ENCODE measurements at regions of chr2 and their contacts with region 1.

Region 1: DNA sequence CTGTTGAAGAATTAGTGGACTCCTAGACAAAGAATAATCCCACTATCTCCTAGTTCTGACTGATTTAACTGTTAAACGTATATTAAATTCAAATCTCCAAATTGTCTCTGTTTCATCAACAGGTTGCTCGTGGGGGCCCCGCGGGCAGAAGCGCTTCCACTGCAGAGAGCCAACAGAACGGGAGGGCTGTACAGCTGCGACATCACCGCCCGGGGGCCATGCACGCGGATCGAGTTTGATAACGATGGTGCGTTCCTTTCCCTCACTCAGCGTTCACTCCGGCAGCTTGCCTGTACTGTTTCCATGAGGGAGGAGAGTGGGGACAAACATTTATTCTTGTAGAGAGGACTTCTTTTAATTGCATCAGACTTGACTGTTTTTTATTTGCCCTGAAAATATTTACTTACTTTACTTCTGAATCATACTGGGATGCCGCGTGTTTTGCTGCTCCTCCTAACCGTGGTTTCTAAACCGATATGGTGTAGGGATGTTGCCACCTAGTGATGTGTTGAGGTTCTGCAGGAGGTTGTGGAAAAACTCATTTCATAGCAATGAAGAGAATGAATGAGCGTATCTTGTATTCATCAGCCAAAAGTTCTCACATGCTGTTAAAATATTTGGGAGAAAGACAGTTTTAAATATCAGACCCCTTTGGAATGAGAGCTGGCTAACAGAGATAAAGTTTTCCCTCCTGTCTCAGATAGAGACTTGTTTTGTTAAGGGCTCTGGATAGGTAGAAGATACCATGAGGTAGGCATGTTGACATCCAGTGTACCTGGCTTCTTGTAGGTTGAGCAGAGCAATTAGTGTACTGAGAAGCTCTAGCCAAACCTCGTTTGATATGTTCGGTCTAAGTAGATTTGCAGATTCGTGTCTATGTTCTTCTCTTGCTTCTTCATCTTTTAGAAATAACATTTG is 38.3 kb downstream of the ITGA6 start:
- DNase-seq: peak; percentile 51 to 87 (median 69)
- ATAC-seq: peak; percentile 40
- H3K4me3 ChIP-seq: no peak overlapping the region
- H3K4me3 Mint-ChIP-seq: peak overlapping the region; percentile 73
- H3K27ac ChIP-seq: peak overlapping the region; percentile 49 to 79
- H3K27ac Mint-ChIP-seq: peak overlapping the region; percentile 93
- H3K4me1 ChIP-seq: peaks cover 54% of the 10 kb centered on the region
- H3K4me1 Mint-ChIP-seq: peaks cover 79% of the 10 kb centered on the region
- H3K27me3 ChIP-seq: no peaks in the 10 kb centered on the region
- H3K27me3 Mint-ChIP-seq: no peaks in the 10 kb centered on the region
- CTCF ChIP-seq: peak; percentile 90

Region 2: DNA sequence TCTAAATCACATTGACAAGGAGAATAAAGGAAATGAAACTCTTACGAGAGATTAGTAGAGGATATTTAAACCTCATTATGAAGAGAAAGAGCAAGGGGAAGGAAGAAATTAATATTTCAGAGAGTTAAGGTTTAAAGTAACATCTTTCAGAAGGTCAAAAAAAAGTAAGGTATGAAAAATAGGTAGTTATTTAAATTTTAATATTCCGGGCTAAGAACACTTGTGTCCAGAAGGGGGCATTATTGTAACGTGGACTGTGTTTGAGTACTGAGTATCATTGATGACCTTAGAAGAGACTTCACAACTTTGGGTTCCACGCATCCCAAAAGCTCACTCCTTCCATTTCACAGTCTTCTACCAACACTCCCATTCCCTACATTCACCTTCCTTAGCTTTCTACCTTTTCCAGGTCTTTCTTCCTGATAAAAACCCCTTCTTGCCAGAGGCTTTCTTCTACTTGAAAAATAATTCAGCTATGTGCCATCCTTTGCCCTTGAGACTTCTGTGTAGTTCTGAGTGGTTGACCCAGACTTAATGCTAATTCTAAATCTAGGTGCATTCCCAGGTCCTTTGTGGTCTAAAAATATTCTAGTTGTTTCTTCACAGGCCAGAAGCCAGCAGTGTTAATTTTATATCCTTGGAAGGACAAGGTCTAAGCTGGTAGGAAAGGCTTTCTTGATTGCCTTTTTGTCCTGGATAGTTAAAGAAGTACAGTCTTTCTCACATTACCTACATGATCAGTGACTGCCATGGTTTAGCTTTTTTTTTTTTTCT is 761.9 kb before region 1 on chr2:
- CTCF ChIA-PET with region 1: interaction called, 3 read pairs
- POLR2A ChIA-PET with region 1: no interaction called
- intact Hi-C with region 1: loop called (anchors 1 to 2 kb)
- DNase-seq: peak in 4 of 14 experiments; percentile 5 to 59 (median 50)
- ATAC-seq: peak; percentile 52
- H3K4me3 ChIP-seq: no peak overlapping the region
- H3K4me3 Mint-ChIP-seq: no peak overlapping the region
- H3K27ac ChIP-seq: no peak overlapping the region
- H3K27ac Mint-ChIP-seq: peak overlapping the region; percentile 11
- H3K4me1 ChIP-seq: no peaks in the 10 kb centered on the region
- H3K4me1 Mint-ChIP-seq: peaks cover 17% of the 10 kb centered on the region
- H3K27me3 ChIP-seq: no peaks in the 10 kb centered on the region
- H3K27me3 Mint-ChIP-seq: no peaks in the 10 kb centered on the region
- CTCF ChIP-seq: peak; percentile 50

Region 3: GRCh38 chr2:171999604-172000469 is 465.8 kb before region 1 on chr2 and contains the start of gene METAP1D:
- CTCF ChIA-PET with region 1: no interaction called
- POLR2A ChIA-PET with region 1: no interaction called
- intact Hi-C with region 1: loop called (anchors 10 kb)
- DNase-seq: peak; percentile 61 to 93 (median 82)
- ATAC-seq: peak; percentile 90
- H3K4me3 ChIP-seq: peak within 1 kb of the TSS; percentile 75
- H3K4me3 Mint-ChIP-seq: peak within 1 kb of the TSS; percentile 88
- H3K27ac ChIP-seq: peak within 1 kb of the TSS; percentile 23 to 38
- H3K27ac Mint-ChIP-seq: peak within 1 kb of the TSS; percentile 74
- H3K4me1 ChIP-seq: peaks cover 12% of the 10 kb centered on the region
- H3K4me1 Mint-ChIP-seq: peaks cover 23% of the 10 kb centered on the region
- H3K27me3 ChIP-seq: no peaks in the 10 kb centered on the region
- H3K27me3 Mint-ChIP-seq: peaks cover 8% of the 10 kb centered on the region
- CTCF ChIP-seq: no peak
- total RNA-seq, gene METAP1D: 7.2 to 7.9 TPM

Region 4: GRCh38 chr2:172339371-172340010 is 126.2 kb before region 1 on chr2:
- CTCF ChIA-PET with region 1: no interaction called
- POLR2A ChIA-PET with region 1: interaction called, 12 read pairs
- intact Hi-C with region 1: loop called (anchors 1 to 5 kb)
- DNase-seq: peak in 3 of 14 experiments; percentile 24 to 35 (median 32)
- ATAC-seq: peak; percentile 43
- H3K4me3 ChIP-seq: peak overlapping the region; percentile 4
- H3K4me3 Mint-ChIP-seq: peak overlapping the region; percentile 72
- H3K27ac ChIP-seq: no peak overlapping the region
- H3K27ac Mint-ChIP-seq: peak overlapping the region; percentile 6
- H3K4me1 ChIP-seq: peaks cover 10% of the 10 kb centered on the region
- H3K4me1 Mint-ChIP-seq: peaks cover 24% of the 10 kb centered on the region
- H3K27me3 ChIP-seq: no peaks in the 10 kb centered on the region
- H3K27me3 Mint-ChIP-seq: no peaks in the 10 kb centered on the region
- CTCF ChIP-seq: no peak

Region 5: GRCh38 chr2:172452845-172453244 is 12.8 kb before region 1 on chr2:
- CTCF ChIA-PET with region 1: interaction called, 187 read pairs
- POLR2A ChIA-PET with region 1: interaction called, 24 read pairs
- intact Hi-C with region 1: no loop called
- DNase-seq: no peak
- ATAC-seq: no peak
- H3K4me3 ChIP-seq: no peak overlapping the region
- H3K4me3 Mint-ChIP-seq: peak overlapping the region; percentile 36
- H3K27ac ChIP-seq: no peak overlapping the region
- H3K27ac Mint-ChIP-seq: peak overlapping the region; percentile 19
- H3K4me1 ChIP-seq: peaks cover 67% of the 10 kb centered on the region
- H3K4me1 Mint-ChIP-seq: peaks cover 86% of the 10 kb centered on the region
- H3K27me3 ChIP-seq: no peaks in the 10 kb centered on the region
- H3K27me3 Mint-ChIP-seq: no peaks in the 10 kb centered on the region
- CTCF ChIP-seq: no peak

Region 6: DNA sequence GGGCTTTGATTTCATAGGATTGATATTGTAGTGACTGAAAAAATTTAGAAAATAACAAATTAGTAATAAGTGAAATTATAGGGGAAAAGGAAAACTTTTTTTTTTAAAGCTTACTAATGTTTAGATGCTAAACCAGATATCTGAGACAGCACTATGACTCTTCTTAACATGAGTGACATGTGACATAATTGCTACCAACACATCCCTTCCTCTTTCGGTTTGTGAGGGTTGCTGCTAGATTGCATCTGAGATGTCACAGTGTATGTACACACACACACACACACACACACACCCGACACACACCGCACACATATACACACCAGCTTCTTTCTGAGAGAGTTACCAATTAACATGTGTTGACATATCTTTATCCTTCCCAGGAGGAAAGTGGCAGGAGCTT is 287.9 kb after region 1 on chr2:
- CTCF ChIA-PET with region 1: no interaction called
- POLR2A ChIA-PET with region 1: no interaction called
- intact Hi-C with region 1: no loop called
- DNase-seq: no peak
- ATAC-seq: no peak
- H3K4me3 ChIP-seq: no peak overlapping the region
- H3K4me3 Mint-ChIP-seq: no peak overlapping the region
- H3K27ac ChIP-seq: no peak overlapping the region
- H3K27ac Mint-ChIP-seq: no peak overlapping the region
- H3K4me1 ChIP-seq: no peaks in the 10 kb centered on the region
- H3K4me1 Mint-ChIP-seq: no peaks in the 10 kb centered on the region
- H3K27me3 ChIP-seq: peaks cover 3 to 5% of the 10 kb centered on the region in 2 experiments
- H3K27me3 Mint-ChIP-seq: peaks cover 7% of the 10 kb centered on the region
- CTCF ChIP-seq: no peak

Measured in CD4-positive, alpha-beta T cell (primary cell).